AG04450 (cell line): ENCODE measurements at regions of chr6 and their contacts with region 1.

Region 1: DNA sequence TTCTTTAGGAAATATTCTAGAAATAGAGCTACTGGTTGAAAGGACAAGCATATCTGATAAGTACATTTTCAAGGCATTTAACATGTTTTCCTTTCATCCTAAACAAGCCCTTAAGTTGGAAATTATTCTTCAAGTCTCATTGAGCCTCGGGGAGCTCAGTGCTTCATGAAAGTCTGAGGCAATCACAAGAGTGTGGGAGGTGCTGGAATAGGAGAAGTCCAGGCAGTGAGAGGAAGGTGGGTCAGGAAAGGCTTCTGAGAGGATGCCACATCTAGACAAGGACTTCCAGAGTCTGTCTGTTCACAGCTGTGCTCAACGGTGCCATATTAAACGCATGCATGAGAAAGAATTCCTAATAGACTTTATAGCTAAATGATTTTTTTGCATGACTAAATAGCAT is 69.8 kb downstream of the CD83 start:
- DNase-seq: no peak
- H3K4me3 ChIP-seq: no peak overlapping the region
- H3K27ac ChIP-seq: no peak overlapping the region
- H3K27me3 ChIP-seq: peaks cover 25% of the 10 kb centered on the region
- CTCF ChIP-seq: no peak

Region 2: DNA sequence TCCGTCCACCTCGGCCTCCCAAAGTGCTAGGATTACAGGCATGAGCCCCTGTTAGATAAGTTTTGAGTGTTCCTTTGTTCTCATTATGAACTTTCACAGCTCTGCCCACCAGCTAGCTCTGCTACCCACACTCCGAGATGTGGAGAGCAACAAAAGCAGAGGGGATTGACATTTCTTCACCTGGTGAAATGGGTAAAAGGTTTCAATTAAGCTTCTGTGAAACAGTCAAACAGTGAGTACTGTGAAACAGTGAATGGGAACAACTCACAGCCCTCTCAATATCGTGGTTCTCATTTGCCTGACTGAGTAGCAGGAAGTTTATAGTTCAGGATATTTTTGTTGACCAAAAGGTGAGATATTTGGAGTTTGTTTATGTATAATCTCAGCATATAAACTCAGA is 343.0 kb after region 1 on chr6:
- CTCF ChIA-PET with region 1: no interaction called
- POLR2A ChIA-PET with region 1: interaction called, 11 read pairs
- DNase-seq: no peak
- H3K4me3 ChIP-seq: no peak overlapping the region
- H3K27ac ChIP-seq: no peak overlapping the region
- H3K27me3 ChIP-seq: no peaks in the 10 kb centered on the region
- CTCF ChIP-seq: no peak